Transverse colon (tissue), 4 donors: ENCODE measurements at regions of chr10 and their contacts with region 1.

Region 1: DNA sequence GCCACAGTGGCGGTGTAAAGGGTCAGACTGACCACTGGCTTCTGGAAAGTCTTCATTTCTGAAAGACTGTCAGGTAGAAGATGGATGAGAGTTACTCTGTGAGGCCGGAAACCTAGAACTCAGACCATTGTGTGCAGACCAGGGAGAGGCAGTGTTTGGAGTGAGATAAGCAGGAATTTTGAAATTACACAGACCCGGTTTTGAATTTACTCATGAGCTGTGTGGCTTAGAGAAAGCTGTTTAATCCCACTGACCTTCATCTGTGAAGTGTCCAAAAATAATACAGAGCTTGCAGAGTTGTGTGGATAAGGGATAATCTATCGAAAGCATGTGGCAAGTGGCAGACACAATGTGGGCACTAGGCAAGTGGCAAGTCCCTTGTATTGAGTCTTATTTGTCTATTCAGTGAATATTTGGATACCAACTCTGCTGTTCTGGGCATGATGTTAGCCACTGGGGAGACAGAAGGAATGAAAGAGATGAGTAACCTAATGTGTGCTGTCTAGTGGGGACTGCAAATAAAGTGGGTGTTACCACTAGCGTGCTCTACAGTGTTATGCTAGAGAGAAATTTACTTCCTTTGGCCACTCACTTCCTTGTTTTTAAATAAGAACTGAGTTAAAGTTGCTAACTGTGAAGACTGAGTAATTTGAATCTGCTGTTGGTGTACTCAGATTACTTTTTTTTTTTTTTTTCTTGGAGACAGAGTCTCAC is 69.4 kb downstream of the KIAA1217 start:
- DNase-seq: no peak
- H3K4me3 ChIP-seq: no peak overlapping the region
- H3K27ac ChIP-seq: no peak overlapping the region
- H3K4me1 ChIP-seq: no peaks in the 10 kb centered on the region
- H3K27me3 ChIP-seq: no peaks in the 10 kb centered on the region
- CTCF ChIP-seq: no peak
- EP300 ChIP-seq: no peak
- POLR2A ChIP-seq: no peak

Region 2: DNA sequence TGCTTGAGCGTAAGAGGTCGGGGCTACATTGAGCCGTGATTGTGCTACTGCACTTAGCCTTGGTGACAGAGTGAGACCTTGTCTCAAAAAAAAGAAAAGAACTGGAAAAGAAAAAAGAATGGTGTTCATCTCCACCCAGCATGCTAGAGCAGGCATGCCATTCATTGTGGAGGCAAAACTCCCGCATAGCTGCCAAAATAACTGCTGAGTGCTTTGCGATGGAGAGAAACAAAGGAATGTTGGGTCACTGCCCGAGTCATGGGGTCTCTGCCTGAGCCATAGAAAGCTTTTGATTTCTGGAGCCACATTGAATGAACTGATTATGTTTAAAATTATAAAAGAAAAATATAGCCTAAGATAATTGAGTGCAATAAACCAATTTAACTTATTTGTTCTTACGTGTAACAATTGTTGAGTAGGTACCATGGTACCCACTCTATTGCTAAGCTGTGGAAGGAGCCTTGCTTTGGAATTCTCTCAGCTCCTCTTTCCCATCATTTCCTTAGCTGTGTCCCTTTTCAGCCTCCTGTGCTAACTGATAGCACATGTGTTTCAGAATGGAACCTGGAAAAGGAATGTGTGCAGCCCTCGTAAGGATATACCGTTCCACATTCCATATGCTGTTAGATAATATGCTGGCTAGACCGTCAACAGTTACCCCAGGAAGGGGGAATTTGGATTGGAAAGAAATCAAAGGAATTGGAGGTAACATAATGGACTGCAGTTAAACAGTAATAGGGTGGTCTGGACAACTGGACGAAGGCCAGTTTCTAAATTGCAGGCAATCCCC is 29.6 kb after region 1 on chr10:
- in situ Hi-C with region 1: no loop called
- intact Hi-C with region 1: loop called (anchors 1 kb)
- DNase-seq: no peak
- H3K4me3 ChIP-seq: no peak overlapping the region
- H3K27ac ChIP-seq: no peak overlapping the region
- H3K4me1 ChIP-seq: no peaks in the 10 kb centered on the region
- H3K27me3 ChIP-seq: no peaks in the 10 kb centered on the region
- CTCF ChIP-seq: no peak
- EP300 ChIP-seq: no peak
- POLR2A ChIP-seq: no peak